Mucosa of descending colon (tissue), 3 donors: ENCODE measurements at regions of chr5 and their contacts with region 1.

Region 1: GRCh38 chr5:111635151-111635902 is 121.7 kb downstream of the NREP start:
- DNase-seq: no peak
- ATAC-seq: no peak
- H3K4me3 ChIP-seq: no peak overlapping the region
- H3K4me1 ChIP-seq: no peaks in the 10 kb centered on the region
- CTCF ChIP-seq: no peak

Region 2: GRCh38 chr5:111584651-111585050 is 50.7 kb before region 1 on chr5:
- intact Hi-C with region 1: loop called in 1 of 2 experiments (anchors 10 kb)
- DNase-seq: no peak
- ATAC-seq: no peak
- H3K4me3 ChIP-seq: no peak overlapping the region
- H3K4me1 ChIP-seq: no peaks in the 10 kb centered on the region
- CTCF ChIP-seq: no peak

Region 3: DNA sequence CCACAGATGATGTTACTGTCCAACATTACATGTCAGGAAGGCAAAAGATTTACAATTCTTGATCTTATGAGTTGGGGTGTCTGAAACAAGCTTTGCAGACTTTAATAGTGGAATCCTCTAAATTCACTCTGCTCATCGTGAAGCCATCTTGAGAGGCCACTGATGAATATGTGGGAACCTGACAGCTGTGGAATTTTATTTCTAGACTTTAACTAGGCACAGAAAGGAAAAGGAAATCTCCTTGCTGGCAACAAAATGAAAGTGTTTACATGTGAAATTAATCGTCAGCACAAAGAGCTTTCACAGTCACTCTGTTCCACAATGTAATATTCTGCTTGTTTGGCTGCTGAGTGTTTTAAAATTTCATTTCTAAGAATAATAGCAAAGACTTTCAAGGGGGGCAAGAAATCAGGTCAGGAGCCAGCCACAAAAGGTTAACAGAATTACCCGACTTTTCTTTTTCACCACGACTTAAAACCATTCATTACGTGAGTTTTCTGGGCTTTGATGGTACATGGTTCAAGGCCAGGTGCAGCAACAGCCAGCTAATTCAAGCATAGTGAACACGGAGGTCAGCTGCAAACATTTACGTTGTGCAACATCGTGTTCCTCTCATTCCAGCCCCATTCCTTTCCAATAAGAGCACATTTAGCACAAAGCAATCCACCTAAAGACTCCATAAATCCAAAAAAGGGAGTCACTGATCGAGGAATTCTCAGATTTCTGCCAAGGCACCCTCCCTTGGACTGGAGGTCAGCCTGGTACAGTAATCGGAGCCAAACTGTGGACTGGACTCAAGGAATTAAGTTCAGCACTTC is 107.1 kb after region 1 on chr5:
- intact Hi-C with region 1: no loop called
- DNase-seq: peak in 1 of 3 donors; percentile 16
- ATAC-seq: peak; percentile 60
- H3K4me3 ChIP-seq: no peak overlapping the region
- H3K4me1 ChIP-seq: peaks cover 15% of the 10 kb centered on the region
- CTCF ChIP-seq: no peak